Activated naive CD4-positive, alpha-beta T cell treated with anti-CD3 and anti-CD28 coated beads for 36 hours (primary cell): ENCODE measurements at regions of chr15 and their contacts with region 1.

Region 1: GRCh38 chr15:40694688-40695468 is at the start of gene RAD51:
- DNase-seq: peak; percentile 96
- H3K4me3 Mint-ChIP-seq: peak within 1 kb of the TSS; percentile 99
- H3K27ac Mint-ChIP-seq: peak within 1 kb of the TSS; percentile 99
- H3K4me1 Mint-ChIP-seq: peaks cover 25% of the 10 kb centered on the region
- H3K27me3 Mint-ChIP-seq: no peaks in the 10 kb centered on the region
- total RNA-seq, gene RAD51: 65.8 to 68.8 TPM

Region 2: GRCh38 chr15:40564591-40565332 is 130.1 kb before region 1 on chr15 and contains the start of gene CCDC32:
- CTCF ChIA-PET with region 1: no interaction called
- intact Hi-C with region 1: loop called (anchors 1 kb)
- DNase-seq: peak; percentile 98
- H3K4me3 Mint-ChIP-seq: peak within 1 kb of the TSS; percentile 96
- H3K27ac Mint-ChIP-seq: peak within 1 kb of the TSS; percentile 90
- H3K4me1 Mint-ChIP-seq: peaks cover 45% of the 10 kb centered on the region
- H3K27me3 Mint-ChIP-seq: no peaks in the 10 kb centered on the region
- total RNA-seq, gene CCDC32: 25.4 to 25.8 TPM

Region 3: DNA sequence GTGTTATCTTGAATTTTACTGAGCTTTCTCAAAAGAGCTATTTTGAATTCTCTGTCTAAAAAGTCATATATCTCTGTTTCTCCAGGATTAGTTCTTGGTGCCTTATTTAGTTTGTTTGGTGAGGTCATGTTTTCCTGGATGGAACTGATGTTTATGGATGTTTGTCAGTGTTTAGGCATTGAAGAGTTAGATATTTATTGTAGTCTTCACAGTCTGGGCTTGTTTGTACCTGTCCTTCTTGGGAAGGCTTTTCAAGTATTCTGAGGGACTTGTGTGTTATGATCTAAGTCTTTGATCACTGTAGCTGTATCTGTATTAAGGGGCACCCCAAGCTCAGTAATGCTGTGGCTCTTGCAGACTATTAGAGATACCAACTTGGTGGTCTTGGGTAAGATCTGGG is 10.5 kb before region 1 on chr15:
- CTCF ChIA-PET with region 1: interaction called, 15 read pairs
- intact Hi-C with region 1: loop called (anchors 1 kb)
- DNase-seq: no peak
- H3K4me3 Mint-ChIP-seq: no peak overlapping the region
- H3K27ac Mint-ChIP-seq: no peak overlapping the region
- H3K4me1 Mint-ChIP-seq: no peaks in the 10 kb centered on the region
- H3K27me3 Mint-ChIP-seq: no peaks in the 10 kb centered on the region

Region 4: DNA sequence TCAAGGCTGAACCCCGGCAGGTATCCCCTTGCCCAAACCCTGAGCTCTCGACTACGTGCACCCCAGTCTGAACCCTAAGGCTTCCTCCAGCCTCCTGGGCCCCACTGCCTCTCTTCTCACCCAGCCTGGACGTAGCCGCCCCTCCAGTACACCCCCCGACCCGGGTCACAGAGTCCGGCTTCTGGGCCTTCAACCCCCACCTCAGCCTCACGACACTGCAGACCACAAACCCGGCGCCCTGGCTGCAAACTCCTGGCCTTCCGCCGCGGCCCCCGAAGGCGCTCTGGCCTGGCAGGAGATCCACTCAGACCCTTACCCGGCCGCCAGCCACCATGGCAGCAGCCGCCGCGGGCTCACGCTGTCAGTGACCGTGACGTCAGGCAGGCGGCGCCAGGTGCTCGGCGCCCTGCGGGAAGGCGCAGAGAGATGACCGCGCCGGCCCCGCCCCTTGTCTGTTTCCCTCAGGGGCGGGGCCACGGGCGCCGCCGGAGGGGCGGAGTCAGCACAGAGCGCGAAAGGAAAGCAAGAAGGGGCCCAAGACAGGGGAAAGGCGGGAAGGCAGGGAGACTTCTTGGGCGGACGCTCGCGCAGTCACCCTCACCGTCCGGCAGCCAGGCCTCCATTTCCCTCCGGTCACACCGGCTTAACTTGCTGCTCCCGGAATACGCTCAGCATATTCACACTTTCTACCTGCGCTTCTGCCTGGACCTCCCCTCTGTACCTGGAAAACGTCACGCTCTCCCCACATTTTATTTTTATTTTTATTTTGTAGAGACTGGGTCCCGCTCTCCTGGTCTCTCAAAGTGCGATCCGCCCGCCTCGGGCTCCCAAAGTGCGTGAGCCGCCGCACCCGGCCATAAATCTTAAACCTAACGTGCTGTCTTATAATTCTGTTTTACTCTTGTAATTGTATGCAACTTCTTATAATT is 60.3 kb after region 1 on chr15 and contains the start of gene RMDN3:
- CTCF ChIA-PET with region 1: no interaction called
- intact Hi-C with region 1: loop called (anchors 1 kb)
- DNase-seq: peak; percentile 95
- H3K4me3 Mint-ChIP-seq: peak within 1 kb of the TSS; percentile 94
- H3K27ac Mint-ChIP-seq: peak within 1 kb of the TSS; percentile 98
- H3K4me1 Mint-ChIP-seq: peaks cover 25% of the 10 kb centered on the region
- H3K27me3 Mint-ChIP-seq: no peaks in the 10 kb centered on the region
- total RNA-seq, gene RMDN3: 17.8 to 19.2 TPM

Region 5: GRCh38 chr15:40769274-40770146 is 74.6 kb after region 1 on chr15 and contains the start of gene C15orf62:
- CTCF ChIA-PET with region 1: no interaction called
- intact Hi-C with region 1: loop called (anchors 1 kb)
- DNase-seq: peak; percentile 82
- H3K4me3 Mint-ChIP-seq: peak within 1 kb of the TSS; percentile 40
- H3K27ac Mint-ChIP-seq: peak within 1 kb of the TSS; percentile 87
- H3K4me1 Mint-ChIP-seq: peaks cover 42% of the 10 kb centered on the region
- H3K27me3 Mint-ChIP-seq: no peaks in the 10 kb centered on the region
- total RNA-seq, gene C15orf62: 0.10 to 0.33 TPM

Region 6: DNA sequence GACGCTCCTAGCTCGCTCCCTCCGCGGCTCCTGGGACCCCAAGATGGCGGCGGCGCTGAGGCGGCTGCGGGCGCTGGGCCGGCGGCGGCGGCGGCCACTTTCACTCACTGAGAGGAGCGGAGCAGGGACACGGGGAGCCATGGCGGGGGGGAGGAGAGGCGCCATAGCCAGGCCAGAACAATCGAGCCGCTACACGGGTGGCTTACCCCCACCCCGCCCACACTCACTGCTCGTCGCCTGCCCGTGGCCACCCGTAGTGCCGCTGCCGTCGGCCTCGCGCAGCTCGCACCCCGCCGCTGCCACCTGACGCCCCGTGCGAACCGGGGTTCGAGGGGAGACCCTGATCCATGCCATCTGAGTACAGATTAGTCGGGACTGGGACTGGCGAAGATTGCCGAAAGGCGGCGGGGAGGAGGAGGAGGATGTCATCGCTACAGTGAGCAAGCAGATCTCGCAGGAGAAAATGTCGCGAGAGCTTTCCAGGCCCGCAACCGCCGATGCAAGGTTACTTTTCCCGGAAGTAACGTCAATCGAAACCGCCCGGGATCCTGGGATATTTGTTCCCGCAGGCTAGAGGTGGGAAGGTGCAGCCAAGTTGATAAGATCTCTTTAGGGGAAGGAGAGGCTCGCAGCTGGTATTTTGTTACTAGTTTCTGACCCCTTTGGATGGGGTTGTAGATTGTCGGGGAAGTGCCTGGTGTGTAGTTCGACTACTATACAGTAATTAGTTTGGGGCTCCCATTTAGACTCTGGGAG is 421.4 kb after region 1 on chr15 and contains the start of gene INO80:
- CTCF ChIA-PET with region 1: no interaction called
- intact Hi-C with region 1: loop called (anchors 1 kb)
- DNase-seq: peak; percentile 99
- H3K4me3 Mint-ChIP-seq: peak within 1 kb of the TSS; percentile 88
- H3K27ac Mint-ChIP-seq: peak within 1 kb of the TSS; percentile 96
- H3K4me1 Mint-ChIP-seq: peaks cover 21% of the 10 kb centered on the region
- H3K27me3 Mint-ChIP-seq: no peaks in the 10 kb centered on the region
- total RNA-seq, gene INO80: 14.0 to 16.8 TPM

Region 7: GRCh38 chr15:41331833-41332787 is 637.2 kb after region 1 on chr15 and contains the start of gene OIP5:
- CTCF ChIA-PET with region 1: no interaction called
- intact Hi-C with region 1: loop called (anchors 5 kb)
- DNase-seq: peak; percentile 100
- H3K4me3 Mint-ChIP-seq: peak within 1 kb of the TSS; percentile 100
- H3K27ac Mint-ChIP-seq: peak within 1 kb of the TSS; percentile 98
- H3K4me1 Mint-ChIP-seq: peaks cover 26% of the 10 kb centered on the region
- H3K27me3 Mint-ChIP-seq: no peaks in the 10 kb centered on the region
- total RNA-seq, gene OIP5: 9.5 to 10.7 TPM